ENCODE measurements at regions of chr7 and their contacts with region 1.

Region 1: GRCh38 chr7:94289071-94289470 is 105.6 kb upstream of the COL1A2 start:
- DNase-seq: peak; percentile 61
- H3K4me3 ChIP-seq: no peak overlapping the region
- H3K27ac ChIP-seq: no peak overlapping the region
- H3K4me1 ChIP-seq: no peaks in the 10 kb centered on the region
- H3K27me3 ChIP-seq: no peaks in the 10 kb centered on the region
- CTCF ChIP-seq: peak; percentile 100

Region 2: DNA sequence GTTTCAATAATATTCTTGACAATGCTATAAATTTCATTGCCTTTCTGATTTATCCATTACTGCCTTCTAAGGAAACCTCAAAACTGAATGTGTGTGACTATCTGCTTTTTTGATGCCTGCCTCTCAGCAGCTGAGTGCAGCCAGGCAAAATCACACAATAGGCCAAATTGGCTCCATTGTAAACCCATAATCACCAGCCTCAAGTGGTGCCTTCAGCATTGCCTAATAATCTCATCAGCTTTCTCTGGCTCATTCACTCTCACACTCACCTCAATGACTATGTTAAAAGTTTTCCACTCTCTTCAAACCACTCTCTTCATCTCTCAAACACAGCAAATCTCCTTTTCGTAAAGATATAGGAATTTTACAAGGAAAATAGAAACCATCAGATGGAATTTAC is 76.9 kb before region 1 on chr7:
- CTCF ChIA-PET with region 1: no interaction called
- dilution Hi-C with region 1: no loop called
- in situ Hi-C with region 1: no loop called
- intact Hi-C with region 1: no loop called
- DNase-seq: no peak
- H3K4me3 ChIP-seq: no peak overlapping the region
- H3K27ac ChIP-seq: no peak overlapping the region
- H3K4me1 ChIP-seq: no peaks in the 10 kb centered on the region
- H3K27me3 ChIP-seq: no peaks in the 10 kb centered on the region
- CTCF ChIP-seq: no peak

Region 3: DNA sequence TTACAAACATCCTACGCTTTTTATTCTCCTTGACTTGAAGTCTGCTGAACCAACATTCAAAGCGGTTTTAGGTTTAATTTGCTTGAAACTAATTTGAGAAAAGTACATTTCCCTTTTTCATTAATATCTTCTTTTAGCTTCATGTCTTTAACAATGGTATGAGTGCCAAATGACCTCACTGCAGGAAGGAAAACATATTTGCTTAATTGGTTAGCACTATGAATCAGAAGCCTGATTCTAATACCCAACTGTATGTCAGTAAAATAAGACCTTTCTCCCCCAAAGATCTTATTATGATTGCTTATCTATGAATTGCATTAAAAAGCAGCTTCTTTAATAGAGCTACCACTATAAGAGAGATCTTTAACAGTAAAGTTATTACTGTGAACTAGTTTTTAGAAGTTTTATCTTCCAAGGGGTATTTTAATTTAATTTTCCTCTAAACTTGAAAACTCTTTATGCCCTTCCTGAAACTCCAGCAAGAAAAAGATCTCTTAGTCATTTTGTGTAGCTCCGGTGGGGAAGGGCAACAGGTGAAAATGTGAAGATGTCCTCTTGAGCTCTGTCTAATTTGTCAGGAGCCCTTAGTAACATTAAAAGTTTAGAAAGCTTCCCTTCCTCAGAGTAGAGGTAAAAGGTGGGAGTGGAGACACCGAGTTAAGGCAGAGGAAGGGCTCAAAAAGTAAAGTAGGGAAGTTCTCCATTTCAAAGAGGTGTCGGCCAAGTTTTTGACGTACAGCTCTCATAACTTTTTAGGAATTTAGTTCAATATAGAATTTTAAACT is 111.8 kb after region 1 on chr7:
- CTCF ChIA-PET with region 1: interaction called, 16 read pairs
- dilution Hi-C with region 1: loop called (anchors 5 kb)
- in situ Hi-C with region 1: loop called in 1 of 2 experiments (anchors 10 kb)
- intact Hi-C with region 1: no loop called
- DNase-seq: no peak
- H3K4me3 ChIP-seq: no peak overlapping the region
- H3K27ac ChIP-seq: no peak overlapping the region
- H3K4me1 ChIP-seq: peaks cover 3% of the 10 kb centered on the region
- H3K27me3 ChIP-seq: peaks cover 2% of the 10 kb centered on the region
- CTCF ChIP-seq: no peak

Region 4: DNA sequence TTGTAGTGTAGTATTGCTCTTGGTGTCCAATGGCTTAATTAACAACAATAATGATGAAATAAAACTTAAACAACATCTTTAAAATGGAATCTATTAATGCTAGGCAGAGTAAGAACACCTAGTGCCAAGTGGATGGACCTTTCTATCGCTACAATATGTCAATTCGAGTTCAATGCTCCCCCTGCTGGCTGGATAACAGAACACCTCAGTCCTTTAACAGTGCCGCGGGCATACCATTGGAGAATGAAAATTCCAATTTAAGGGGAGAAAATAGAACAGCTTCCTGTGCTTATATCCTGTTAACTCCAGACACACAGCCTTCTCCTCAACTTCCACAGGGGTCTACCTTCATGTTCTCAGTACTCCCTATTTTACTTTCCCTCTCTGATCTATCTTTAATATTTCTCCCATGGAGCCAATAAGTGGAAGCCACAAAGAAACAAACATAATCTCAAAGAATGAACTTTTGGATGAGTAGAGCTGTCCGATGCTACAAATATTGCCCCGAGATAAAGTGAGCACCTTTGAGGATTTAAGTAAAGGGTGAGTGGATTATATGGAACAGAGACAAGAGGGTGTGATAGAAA is 147.0 kb after region 1 on chr7:
- CTCF ChIA-PET with region 1: interaction called, 3 read pairs
- dilution Hi-C with region 1: no loop called
- in situ Hi-C with region 1: no loop called
- intact Hi-C with region 1: loop called (anchors 1 kb)
- DNase-seq: peak; percentile 47
- H3K4me3 ChIP-seq: no peak overlapping the region
- H3K27ac ChIP-seq: no peak overlapping the region
- H3K4me1 ChIP-seq: no peaks in the 10 kb centered on the region
- H3K27me3 ChIP-seq: peaks cover under 1% of the 10 kb centered on the region
- CTCF ChIP-seq: peak; percentile 80 to 90

Region 5: GRCh38 chr7:95045236-95045923 is 756.3 kb after region 1 on chr7:
- CTCF ChIA-PET with region 1: no interaction called
- dilution Hi-C with region 1: no loop called
- in situ Hi-C with region 1: no loop called
- intact Hi-C with region 1: loop called (anchors 2 kb)
- DNase-seq: peak; percentile 1
- H3K4me3 ChIP-seq: no peak overlapping the region
- H3K27ac ChIP-seq: no peak overlapping the region
- H3K4me1 ChIP-seq: no peaks in the 10 kb centered on the region
- H3K27me3 ChIP-seq: peaks cover 2% of the 10 kb centered on the region
- CTCF ChIP-seq: peak in 1 of 2 donors; percentile 46

Region 6: DNA sequence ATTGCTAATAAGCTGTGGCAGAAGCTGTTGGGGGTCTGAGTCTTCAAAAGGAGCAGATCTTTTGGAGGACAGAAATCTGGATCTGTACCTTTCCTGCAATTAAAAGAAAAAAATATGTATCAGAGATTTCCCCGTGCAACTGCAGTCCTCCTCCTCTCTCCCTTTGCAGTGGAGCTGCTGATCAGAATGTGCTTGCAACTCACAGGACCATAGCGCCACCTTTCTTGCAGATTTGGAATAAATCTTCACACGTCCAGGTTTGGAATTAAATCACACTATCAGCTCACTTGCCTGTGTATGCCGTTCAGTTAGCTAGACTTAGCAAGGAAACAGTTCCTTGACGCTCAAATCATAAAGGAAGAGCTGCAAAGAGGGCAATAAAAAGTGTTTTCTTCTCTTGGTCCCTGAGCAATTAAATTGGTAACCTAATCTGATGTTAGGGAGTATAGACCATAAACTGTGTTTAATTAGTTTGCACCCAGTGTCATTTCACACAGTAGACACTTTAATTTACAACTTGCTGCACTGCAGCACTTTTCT is 957.8 kb after region 1 on chr7:
- CTCF ChIA-PET with region 1: interaction called, 3 read pairs
- dilution Hi-C with region 1: no loop called
- in situ Hi-C with region 1: no loop called
- intact Hi-C with region 1: loop called (anchors 5 kb)
- DNase-seq: peak; percentile 48
- H3K4me3 ChIP-seq: no peak overlapping the region
- H3K27ac ChIP-seq: no peak overlapping the region
- H3K4me1 ChIP-seq: no peaks in the 10 kb centered on the region
- H3K27me3 ChIP-seq: peaks cover 2% of the 10 kb centered on the region
- CTCF ChIP-seq: peak; percentile 77 to 81

Region 7: GRCh38 chr7:95690367-95690947 is 1401.4 kb after region 1 on chr7:
- CTCF ChIA-PET with region 1: no interaction called
- dilution Hi-C with region 1: no loop called
- in situ Hi-C with region 1: loop called in 1 of 2 experiments (anchors 25 kb)
- intact Hi-C with region 1: loop called (anchors 10 kb)
- DNase-seq: peak; percentile 40
- H3K4me3 ChIP-seq: no peak overlapping the region
- H3K27ac ChIP-seq: peak overlapping the region; percentile 33
- H3K4me1 ChIP-seq: peaks cover 32% of the 10 kb centered on the region
- H3K27me3 ChIP-seq: no peaks in the 10 kb centered on the region
- CTCF ChIP-seq: peak; percentile 35 to 45